ENCODE measurements at regions of chr11 and their contacts with region 1.

Region 1: DNA sequence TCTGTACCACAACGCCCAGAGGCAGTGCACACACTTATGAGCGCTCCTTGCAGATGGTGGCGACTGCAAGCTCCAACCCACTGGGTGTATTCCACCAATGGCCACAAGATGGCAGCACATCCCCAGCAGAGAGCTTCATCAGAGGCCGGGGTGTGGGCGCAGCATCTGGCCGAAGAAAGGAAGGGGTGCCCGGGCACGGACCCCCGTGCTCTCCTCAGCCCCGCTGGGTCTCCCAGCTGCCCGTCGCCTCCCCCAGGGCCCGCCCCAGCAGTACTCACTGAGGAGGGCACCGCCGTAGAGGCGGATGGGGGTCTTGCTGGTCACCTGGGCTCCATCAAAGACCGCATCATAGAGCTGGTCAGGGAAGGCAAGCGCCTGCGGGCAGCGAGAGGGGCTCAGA is 14.2 kb downstream of the TP53I11 start:
- DNase-seq: peak; percentile 84
- H3K4me3 Mint-ChIP-seq: no peak overlapping the region
- H3K27ac Mint-ChIP-seq: no peak overlapping the region
- H3K4me1 Mint-ChIP-seq: no peaks in the 10 kb centered on the region
- H3K27me3 Mint-ChIP-seq: peaks cover 2% of the 10 kb centered on the region

Region 2: DNA sequence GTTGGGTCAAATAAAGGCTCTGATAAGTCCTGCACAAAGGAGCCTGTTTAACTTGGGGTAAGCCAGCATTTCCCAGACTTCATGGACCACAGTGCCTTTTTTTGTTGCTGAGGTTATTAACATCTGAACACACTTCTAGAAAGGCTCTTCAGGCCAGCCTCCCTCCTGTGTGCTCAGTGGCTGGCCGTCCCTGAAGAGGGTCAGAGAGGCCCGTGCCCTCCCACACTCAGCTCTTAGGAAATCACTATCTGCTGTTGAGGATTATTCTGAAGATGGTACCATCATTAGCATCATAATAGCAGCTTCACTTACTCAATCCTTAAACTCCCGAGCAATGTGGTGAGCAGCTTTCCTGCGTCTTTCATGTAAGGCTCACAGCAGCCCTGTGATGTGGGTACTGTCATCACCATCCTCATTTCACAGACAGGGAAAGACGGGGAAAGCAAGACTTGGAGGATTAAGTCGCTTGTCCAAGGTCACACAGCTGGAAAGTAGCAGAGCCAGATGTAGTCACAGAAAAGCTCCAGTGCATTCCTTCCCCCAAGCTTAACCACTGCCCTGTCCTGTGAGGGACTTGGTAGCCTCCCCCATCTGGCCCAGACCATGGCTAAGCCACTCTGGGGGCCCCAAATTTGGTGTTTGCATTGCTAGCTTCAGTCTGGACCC is 138.5 kb before region 1 on chr11:
- CTCF ChIA-PET with region 1: no interaction called
- POLR2A ChIA-PET with region 1: no interaction called
- DNase-seq: no peak
- H3K4me3 Mint-ChIP-seq: no peak overlapping the region
- H3K27ac Mint-ChIP-seq: no peak overlapping the region
- H3K4me1 Mint-ChIP-seq: no peaks in the 10 kb centered on the region
- H3K27me3 Mint-ChIP-seq: no peaks in the 10 kb centered on the region

Region 3: DNA sequence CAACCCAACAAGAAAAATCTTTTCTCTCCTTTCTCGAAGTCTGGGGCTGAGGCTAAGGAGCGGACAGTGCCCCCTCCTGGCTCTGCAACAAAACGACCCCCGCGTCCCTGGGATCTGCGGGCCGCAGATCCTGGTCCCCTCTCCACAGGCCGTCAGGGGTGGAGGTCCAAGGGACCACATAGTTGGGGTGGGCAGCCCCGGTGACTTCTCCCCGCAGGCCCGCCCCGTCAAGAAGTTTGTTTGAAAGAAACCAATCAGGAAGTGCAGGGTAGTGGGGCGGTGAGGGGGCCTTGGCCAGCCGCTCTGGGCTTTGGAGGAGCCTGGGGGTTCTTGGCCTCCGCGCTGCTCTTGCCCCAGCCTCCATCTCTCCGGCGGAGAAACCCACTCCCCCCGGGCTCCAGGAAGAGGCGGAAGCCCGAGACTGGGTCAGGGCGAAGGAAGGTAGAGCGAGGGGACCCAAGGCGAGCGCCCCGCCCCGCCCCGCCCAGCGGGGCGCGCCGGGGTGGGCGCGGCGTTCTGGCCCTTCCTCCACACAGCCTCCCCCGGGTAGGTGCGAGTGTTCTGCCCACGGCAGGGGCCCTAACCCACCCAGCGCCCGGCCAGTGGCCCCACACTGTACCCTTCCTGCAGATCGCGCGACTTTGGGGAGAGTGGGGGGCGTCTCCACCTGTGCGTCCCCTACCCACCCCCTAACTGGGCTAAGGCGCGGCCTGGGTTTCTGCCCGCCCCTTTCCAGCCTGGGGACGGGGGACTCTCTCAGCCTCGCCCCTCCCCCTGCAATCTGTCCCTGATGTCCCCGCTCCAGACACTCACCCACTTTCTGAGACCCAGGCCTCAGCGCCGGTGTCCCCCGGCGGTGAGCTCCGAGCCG is 12.9 kb after region 1 on chr11:
- CTCF ChIA-PET with region 1: interaction called, 30 read pairs
- POLR2A ChIA-PET with region 1: no interaction called
- DNase-seq: no peak
- H3K4me3 Mint-ChIP-seq: peak overlapping the region; percentile 7
- H3K27ac Mint-ChIP-seq: no peak overlapping the region
- H3K4me1 Mint-ChIP-seq: peaks cover 8% of the 10 kb centered on the region
- H3K27me3 Mint-ChIP-seq: peaks cover 31% of the 10 kb centered on the region

Region 4: GRCh38 chr11:45079943-45080719 is 143.6 kb after region 1 on chr11:
- CTCF ChIA-PET with region 1: interaction called, 10 read pairs
- POLR2A ChIA-PET with region 1: no interaction called
- DNase-seq: peak; percentile 71
- H3K4me3 Mint-ChIP-seq: peak overlapping the region; percentile 25
- H3K27ac Mint-ChIP-seq: peak overlapping the region; percentile 81
- H3K4me1 Mint-ChIP-seq: peaks cover 40% of the 10 kb centered on the region
- H3K27me3 Mint-ChIP-seq: peaks cover 3% of the 10 kb centered on the region

Region 5: GRCh38 chr11:45097721-45098493 is 161.4 kb after region 1 on chr11:
- CTCF ChIA-PET with region 1: interaction called, 315 read pairs
- POLR2A ChIA-PET with region 1: no interaction called
- DNase-seq: peak; percentile 56
- H3K4me3 Mint-ChIP-seq: no peak overlapping the region
- H3K27ac Mint-ChIP-seq: no peak overlapping the region
- H3K4me1 Mint-ChIP-seq: peaks cover 20% of the 10 kb centered on the region
- H3K27me3 Mint-ChIP-seq: peaks cover 36% of the 10 kb centered on the region

Region 6: GRCh38 chr11:45102810-45103621 is 166.5 kb after region 1 on chr11:
- CTCF ChIA-PET with region 1: interaction called, 315 read pairs
- POLR2A ChIA-PET with region 1: interaction called, 12 read pairs
- DNase-seq: peak; percentile 76
- H3K4me3 Mint-ChIP-seq: peak overlapping the region; percentile 62
- H3K27ac Mint-ChIP-seq: peak overlapping the region; percentile 65
- H3K4me1 Mint-ChIP-seq: peaks cover 11% of the 10 kb centered on the region
- H3K27me3 Mint-ChIP-seq: peaks cover 34% of the 10 kb centered on the region

Region 7: DNA sequence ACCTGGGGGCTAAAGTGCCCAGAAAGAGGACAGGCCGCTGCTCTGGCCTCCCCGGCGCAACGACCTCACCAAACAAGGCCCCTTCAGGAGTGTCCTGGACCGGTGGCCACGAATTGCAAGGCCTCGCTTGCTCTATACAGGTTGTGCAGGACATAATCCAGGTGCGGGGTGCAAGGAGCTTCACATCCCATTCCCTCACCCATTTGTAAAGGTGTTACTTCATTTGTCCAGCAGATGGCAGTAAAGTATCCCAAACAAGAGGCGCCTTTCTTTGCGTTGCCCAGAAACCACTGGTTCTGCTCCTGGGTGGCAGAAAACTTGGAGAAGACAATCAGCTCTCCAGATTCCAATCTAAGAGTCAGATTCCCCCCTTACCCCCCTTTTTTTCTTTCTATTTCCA is 174.0 kb after region 1 on chr11:
- CTCF ChIA-PET with region 1: interaction called, 315 read pairs
- POLR2A ChIA-PET with region 1: interaction called, 12 read pairs
- DNase-seq: no peak
- H3K4me3 Mint-ChIP-seq: no peak overlapping the region
- H3K27ac Mint-ChIP-seq: no peak overlapping the region
- H3K4me1 Mint-ChIP-seq: no peaks in the 10 kb centered on the region
- H3K27me3 Mint-ChIP-seq: peaks cover 29% of the 10 kb centered on the region

Region 8: GRCh38 chr11:45185221-45185729 is 248.8 kb after region 1 on chr11:
- CTCF ChIA-PET with region 1: no interaction called
- POLR2A ChIA-PET with region 1: no interaction called
- DNase-seq: no peak
- H3K4me3 Mint-ChIP-seq: no peak overlapping the region
- H3K27ac Mint-ChIP-seq: no peak overlapping the region
- H3K4me1 Mint-ChIP-seq: no peaks in the 10 kb centered on the region
- H3K27me3 Mint-ChIP-seq: peaks cover 7% of the 10 kb centered on the region

Measured in activated CD4-positive, alpha-beta memory T cell treated with anti-CD3 and anti-CD28 coated beads, Interleukin-2, amount 10 ng/mL, durations not matched to agents 7 days and 5 days (primary cell).